ENCODE measurements at regions of chr13 and their contacts with region 1.

Region 1: GRCh38 chr13:31930901-31931522 is 100.6 kb upstream of the FRY start:
- DNase-seq: no peak
- ATAC-seq: no peak; the same call in 1 of the 2 replicates
- H3K4me3 Mint-ChIP-seq: no peak overlapping the region
- H3K27ac Mint-ChIP-seq: no peak overlapping the region
- H3K4me1 Mint-ChIP-seq: peaks cover 8% of the 10 kb centered on the region
- H3K27me3 Mint-ChIP-seq: no peaks in the 10 kb centered on the region
- CTCF ChIP-seq: no peak

Region 2: GRCh38 chr13:31846182-31846950 is 84.6 kb before region 1 on chr13:
- CTCF ChIA-PET with region 1: no interaction called
- POLR2A ChIA-PET with region 1: interaction called, 11 read pairs
- DNase-seq: peak; percentile 91
- ATAC-seq: peak; percentile 99
- H3K4me3 Mint-ChIP-seq: peak overlapping the region; percentile 77
- H3K27ac Mint-ChIP-seq: no peak overlapping the region
- H3K4me1 Mint-ChIP-seq: peaks cover 9% of the 10 kb centered on the region
- H3K27me3 Mint-ChIP-seq: peaks cover 60% of the 10 kb centered on the region
- CTCF ChIP-seq: no peak

Region 3: DNA sequence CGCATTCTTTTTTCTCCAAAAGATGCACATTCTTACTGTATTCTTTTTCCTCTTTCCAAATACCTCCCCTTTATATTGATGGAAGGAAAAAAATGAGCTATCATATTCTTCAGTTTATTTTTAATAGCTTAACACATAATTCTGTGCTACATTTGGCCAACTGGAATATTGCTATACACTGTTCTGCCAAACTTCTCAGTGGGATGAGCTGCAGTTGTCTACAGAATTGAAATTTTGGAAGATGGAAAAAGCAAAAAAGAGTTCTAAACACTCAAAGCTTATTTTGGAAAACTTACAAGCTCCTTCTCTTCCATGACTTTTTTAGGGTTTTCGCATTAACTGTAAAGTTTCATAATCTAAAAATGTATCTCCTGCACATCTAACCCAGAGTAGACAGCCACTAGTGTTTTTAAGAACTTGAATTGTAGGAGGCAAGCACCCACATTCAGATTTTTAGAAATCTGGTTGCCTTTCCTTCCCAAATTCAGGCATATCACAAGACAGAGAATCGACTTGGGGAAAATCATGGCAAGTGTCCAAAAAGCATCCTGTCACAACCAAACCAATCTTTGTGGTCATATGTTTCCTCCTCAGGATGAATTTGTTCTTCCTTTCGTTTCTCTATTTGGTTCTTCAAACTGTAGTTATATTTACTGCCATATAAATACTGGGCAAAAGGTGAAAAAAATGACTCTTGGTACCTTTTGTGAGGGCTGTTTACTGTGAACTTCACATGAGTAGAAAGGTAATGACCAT is 10.9 kb before region 1 on chr13:
- CTCF ChIA-PET with region 1: no interaction called
- POLR2A ChIA-PET with region 1: no interaction called
- DNase-seq: no peak
- ATAC-seq: no peak
- H3K4me3 Mint-ChIP-seq: no peak overlapping the region
- H3K27ac Mint-ChIP-seq: no peak overlapping the region
- H3K4me1 Mint-ChIP-seq: peaks cover 13% of the 10 kb centered on the region
- H3K27me3 Mint-ChIP-seq: no peaks in the 10 kb centered on the region
- CTCF ChIP-seq: no peak

Region 4: DNA sequence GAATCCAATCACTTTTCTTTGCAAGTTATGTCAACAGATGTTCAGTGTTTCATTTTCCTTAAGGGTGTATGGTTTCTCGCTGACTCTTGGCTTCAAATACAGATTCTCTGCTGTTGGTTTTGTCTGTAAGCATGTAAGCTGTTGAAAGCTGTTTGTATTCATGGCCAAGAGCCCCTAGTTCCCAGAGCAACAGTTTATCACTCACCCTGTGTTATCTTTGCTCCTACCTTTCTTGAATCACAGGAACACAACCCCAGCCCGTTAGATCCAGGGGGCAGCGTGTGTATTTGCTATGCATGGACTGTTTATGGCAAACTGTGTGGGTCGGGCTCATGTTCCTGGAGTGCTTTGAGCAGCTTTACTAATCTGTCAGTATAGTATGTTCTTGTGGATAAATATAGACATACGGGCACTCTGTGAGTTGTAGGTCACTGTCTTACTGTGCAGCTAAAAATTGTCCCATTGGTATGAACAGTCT is 129.4 kb after region 1 on chr13:
- CTCF ChIA-PET with region 1: no interaction called
- POLR2A ChIA-PET with region 1: no interaction called
- DNase-seq: no peak
- ATAC-seq: no peak
- H3K4me3 Mint-ChIP-seq: no peak overlapping the region
- H3K27ac Mint-ChIP-seq: no peak overlapping the region
- H3K4me1 Mint-ChIP-seq: peaks cover 16% of the 10 kb centered on the region
- H3K27me3 Mint-ChIP-seq: no peaks in the 10 kb centered on the region
- CTCF ChIP-seq: no peak